ENCODE measurements at regions of chr17 and their contacts with region 1.

Region 1: GRCh38 chr17:58317421-58318064 is 11.1 kb downstream of the TSPOAP1 start:
- DNase-seq: peak; percentile 79
- CTCF ChIP-seq: peak; percentile 77

Region 2: DNA sequence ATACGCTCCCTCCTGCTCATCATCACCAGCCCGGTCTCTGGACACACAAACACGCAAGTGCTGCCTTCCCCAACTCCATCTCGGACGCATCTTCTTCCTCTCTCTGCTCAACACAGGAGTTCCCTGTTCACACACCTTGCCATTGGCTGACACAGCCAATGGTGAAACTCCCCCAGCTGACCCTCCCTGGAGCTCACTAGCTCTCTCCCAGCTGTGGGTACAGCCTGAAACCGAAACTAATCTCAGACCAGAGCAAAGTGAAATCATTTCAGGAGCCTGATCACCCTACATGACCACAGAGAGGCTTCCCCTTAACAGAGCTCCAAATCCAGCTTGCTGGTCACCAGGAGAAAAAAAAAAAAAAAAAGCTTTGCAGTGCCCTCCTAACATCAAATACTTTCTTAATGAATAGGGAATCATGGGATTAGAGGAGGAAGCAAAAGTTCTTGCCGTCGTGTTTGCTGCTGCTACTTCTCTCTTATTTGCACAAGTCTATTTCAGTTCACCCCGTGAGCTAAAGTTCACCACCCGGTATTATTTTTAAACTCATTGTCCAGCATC is 370.7 kb before region 1 on chr17:
- CTCF ChIA-PET with region 1: no interaction called
- POLR2A ChIA-PET with region 1: no interaction called
- DNase-seq: peak; percentile 76
- CTCF ChIP-seq: no peak

Region 3: GRCh38 chr17:58249270-58250133 is 68.0 kb before region 1 on chr17:
- CTCF ChIA-PET with region 1: interaction called, 11 read pairs
- POLR2A ChIA-PET with region 1: no interaction called
- DNase-seq: peak; percentile 95
- CTCF ChIP-seq: peak; percentile 83

Region 4: DNA sequence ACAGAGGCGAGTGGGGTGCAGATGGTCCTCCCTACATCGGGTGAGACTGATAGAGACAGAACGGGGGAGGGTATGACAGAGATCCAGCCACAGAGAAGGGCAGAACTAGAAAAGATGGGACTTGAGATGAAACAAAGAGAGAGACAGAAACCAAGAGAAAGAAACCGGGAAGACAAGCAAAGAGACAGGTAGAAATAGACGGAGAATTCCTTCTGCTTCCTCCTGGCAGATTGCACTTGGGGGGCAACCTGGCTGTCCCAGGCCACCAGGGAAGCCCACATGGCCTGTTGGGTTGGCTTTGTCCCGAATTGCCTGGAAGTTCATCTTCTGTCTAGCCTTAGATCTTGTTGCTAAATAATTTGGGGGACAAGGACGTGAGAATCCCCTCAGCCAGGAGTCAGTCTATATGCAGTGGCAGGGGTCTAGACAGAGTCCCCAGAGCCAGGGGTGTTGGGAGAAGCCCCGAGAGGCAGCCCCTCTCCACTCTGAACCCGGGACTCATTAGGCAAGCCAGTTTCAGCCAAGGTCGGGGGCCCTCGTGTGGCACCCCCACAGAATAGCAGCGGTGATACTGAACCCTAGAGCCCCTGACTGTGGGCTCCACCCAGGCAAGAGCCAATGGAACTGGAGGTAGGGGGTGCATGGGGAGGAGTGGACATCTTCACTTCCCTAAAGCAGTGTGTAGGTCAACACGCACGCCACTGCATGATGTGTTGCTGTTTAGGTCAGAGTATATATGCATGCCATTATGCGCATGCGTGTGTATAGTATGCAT is 11.7 kb after region 1 on chr17:
- CTCF ChIA-PET with region 1: interaction called, 42 read pairs
- POLR2A ChIA-PET with region 1: interaction called, 16 read pairs
- DNase-seq: peak; percentile 76
- CTCF ChIP-seq: peak; percentile 65

Region 5: DNA sequence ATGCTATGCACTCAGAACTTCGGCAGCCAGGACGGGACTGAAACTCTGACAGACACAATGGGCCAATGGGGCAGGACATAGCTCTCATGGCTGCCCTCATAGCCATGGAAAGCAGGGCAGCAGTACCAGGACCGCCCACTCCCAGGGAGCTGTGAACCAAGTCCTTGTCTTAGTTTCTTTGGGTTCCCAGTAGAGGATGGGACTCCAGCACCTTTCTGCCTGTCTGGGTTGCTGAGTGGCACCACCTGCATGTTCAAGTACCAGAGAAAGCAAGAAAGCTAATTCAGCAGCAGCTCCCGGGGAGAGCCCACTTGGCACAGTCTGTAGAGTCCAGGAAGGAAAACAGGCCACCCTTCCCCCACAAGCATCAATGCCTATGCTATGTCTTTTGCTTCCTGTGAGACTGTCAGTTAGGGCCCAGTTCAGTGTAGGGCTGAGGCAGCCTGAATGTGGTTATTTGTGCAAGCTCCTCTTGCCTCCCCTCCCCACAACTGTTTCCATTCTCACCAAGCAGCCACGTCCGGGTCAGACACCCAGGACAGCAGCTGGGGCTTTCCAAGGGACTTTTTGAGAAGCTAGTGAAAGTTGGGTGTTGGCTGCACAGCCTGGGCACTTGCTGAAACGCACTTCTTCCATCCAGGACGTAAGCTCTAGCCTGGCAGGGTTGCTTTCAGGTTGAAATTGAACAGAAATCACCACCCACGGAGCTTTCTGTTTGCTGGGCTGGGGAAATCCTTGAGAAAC is 26.7 kb after region 1 on chr17:
- CTCF ChIA-PET with region 1: interaction called, 50 read pairs
- POLR2A ChIA-PET with region 1: interaction called, 10 read pairs
- DNase-seq: peak; percentile 76
- CTCF ChIP-seq: no peak

Region 6: DNA sequence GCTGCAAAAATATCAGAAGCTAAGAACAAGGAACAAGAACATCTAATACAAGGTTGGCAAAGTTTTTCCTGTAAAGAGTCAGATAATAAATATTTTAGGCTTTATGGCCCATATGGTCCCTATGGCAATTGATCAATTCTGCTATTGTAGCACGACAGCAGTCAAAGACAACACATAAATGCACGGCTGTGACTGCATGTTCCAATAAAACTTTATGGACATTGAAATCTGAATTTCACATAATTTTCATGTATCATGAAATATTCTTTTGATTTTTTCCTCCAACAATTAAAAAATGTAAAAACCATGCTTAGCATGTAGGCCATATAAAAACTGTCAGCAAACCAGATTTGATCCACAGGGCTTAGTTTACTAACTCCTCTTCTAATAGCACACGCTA is 110.3 kb after region 1 on chr17:
- CTCF ChIA-PET with region 1: interaction called, 15 read pairs
- POLR2A ChIA-PET with region 1: interaction called, 5 read pairs
- DNase-seq: no peak
- CTCF ChIP-seq: no peak

Measured in GM10248 (cell line).